Mammary epithelial cell (primary cell): ENCODE measurements at regions of chr3 and their contacts with region 1.

Region 1: DNA sequence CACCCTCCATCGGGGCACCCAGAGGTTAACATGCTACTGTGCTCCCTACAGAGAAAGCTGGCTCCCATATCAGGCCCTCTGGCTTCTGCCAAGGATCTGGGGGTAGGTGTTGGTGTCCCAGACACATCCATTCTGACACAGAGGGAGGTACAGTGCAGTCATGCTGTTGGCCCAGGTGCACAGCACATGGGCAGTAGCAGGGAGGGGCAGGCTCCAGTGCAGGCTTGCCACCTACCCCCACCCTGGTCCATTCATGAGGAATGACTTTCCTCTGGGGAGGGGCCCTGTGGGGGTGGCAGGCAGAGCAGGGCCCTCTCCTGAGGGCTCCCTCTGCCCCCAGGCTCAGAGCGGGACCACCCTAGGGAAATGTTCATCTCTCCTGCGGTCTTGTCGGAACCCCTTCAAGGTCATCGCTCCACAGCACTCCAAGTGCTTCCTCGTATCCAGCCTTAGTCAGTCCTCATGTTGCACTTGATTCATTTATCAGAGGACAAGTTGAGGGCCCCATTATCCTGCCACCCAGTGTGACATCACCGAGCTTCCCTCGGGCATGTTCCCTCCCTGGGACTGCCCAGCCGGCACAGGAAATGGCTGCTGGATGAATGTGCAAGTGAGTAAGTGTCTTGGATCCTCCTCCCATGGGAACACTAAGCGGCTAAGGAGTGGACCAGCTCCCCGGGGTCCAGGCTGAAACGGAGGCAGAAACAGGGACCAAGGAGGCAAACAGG is 10.0 kb downstream of the DUSP7 start:
- DNase-seq: peak; percentile 100
- H3K4me3 ChIP-seq: peak overlapping the region in 2 of 3 experiments; percentile 4 to 21
- H3K27ac ChIP-seq: peak overlapping the region; percentile 98
- H3K4me1 ChIP-seq: peaks cover 60% of the 10 kb centered on the region
- H3K27me3 ChIP-seq: no peaks in the 10 kb centered on the region
- CTCF ChIP-seq: no peak

Region 2: GRCh38 chr3:51941798-51942602 is 104.3 kb before region 1 on chr3 and contains the starts of genes PARP3 and RRP9:
- CTCF ChIA-PET with region 1: no interaction called
- dilution Hi-C with region 1: no loop called
- in situ Hi-C with region 1: loop called in 1 of 2 experiments (anchors 5 kb)
- intact Hi-C with region 1: loop called (anchors 1 kb)
- DNase-seq: peak; percentile 100
- H3K4me3 ChIP-seq: peak within 1 kb of the TSS; percentile 62 to 80 (median 73)
- H3K27ac ChIP-seq: peak within 1 kb of the TSS; percentile 38
- H3K4me1 ChIP-seq: peaks cover 21% of the 10 kb centered on the region
- H3K27me3 ChIP-seq: no peaks in the 10 kb centered on the region
- CTCF ChIP-seq: peak; percentile 98 to 100
- total RNA-seq, gene PARP3: 16.1 to 19.7 TPM
- total RNA-seq, gene RRP9: 22.3 to 44.5 TPM

Region 3: DNA sequence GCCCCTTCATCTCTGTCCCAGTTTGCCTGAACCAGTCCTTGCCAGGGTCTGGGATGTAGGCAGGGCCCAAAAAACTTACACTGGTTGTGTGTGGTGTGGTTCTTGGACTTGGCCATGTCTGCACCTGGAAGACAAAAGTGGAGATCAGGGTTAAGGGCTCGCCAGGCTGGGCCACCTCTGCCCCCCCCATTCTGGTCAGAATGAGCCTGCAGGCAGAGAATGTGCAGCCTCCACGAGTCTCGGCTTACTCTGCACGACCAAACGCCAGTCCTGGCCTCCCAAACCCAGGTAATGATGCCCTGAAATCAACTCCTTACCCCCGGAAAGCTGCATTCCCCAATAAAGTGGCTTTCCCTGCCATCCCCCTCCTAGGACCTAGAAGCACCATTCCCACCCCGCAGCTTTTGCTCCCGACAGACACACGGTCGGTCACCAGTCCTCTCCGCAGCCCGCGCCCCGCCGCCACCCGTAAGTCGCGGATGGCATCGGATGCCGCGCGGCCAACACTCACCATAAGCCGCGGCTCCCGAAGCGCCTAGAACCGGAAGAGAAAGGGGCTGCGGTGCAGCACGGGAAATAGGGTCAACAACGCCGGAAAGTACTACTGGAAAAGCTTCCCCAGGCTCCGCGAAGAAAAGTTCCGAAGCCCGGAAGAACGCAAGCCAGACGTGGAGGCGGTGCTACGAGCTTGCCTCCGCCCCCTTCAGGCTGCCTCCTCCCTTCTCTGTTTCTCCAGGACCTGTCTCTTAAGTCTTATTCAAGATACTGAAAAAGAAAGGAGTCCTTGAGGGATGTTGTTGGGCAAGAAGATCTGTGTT is 50.8 kb before region 1 on chr3 and contains the start of gene RPL29:
- CTCF ChIA-PET with region 1: no interaction called
- dilution Hi-C with region 1: loop called (anchors 5 kb)
- in situ Hi-C with region 1: loop called (anchors 5 to 10 kb)
- intact Hi-C with region 1: no loop called
- DNase-seq: peak; percentile 90
- H3K4me3 ChIP-seq: peak within 1 kb of the TSS; percentile 59 to 96 (median 74)
- H3K27ac ChIP-seq: peak within 1 kb of the TSS; percentile 85
- H3K4me1 ChIP-seq: peaks cover 23% of the 10 kb centered on the region
- H3K27me3 ChIP-seq: no peaks in the 10 kb centered on the region
- CTCF ChIP-seq: no peak
- total RNA-seq, gene RPL29: 1,040 to 1,174 TPM

Region 4: DNA sequence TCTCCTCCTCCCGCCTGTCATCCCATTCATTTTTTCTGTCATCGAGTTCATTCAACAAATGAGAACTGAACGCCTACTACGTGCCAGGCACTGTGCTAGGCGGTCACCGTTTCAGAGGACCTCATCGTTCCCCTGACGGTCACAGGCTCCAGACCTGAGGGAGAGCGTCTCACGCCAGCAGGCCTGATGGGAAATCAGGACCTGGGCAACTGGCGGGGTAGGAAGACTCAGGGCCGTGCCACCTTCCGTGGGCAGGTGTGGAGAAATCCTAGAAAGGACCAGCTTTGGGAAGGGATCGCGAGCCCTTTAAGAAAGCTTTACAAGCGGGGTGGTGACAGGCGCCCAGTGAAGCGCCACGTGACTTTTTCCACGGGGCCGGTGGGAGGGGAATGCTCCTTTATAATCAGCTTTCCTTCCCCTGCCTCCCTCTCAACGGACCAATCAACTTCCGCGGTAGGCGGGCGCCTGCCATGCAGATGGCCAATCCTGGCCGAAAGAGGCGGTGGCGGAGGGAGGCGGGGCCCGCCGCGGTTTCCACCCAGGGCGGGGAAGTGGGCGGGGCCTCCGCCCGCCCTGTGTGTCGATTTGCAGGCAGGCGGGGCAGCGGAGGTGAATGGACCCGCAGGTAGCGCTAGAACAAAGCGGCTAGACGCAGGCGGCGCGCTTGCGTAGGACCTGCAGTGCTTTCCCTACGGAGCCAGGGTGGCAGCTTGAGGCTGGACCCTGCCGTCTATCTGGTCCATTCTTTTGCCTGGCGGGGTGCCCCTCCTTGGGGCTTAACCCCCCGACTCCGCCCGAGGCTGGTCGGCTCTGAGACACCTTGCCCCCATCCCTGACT is 10.8 kb after region 1 on chr3:
- CTCF ChIA-PET with region 1: interaction called, 5 read pairs
- dilution Hi-C with region 1: no loop called
- in situ Hi-C with region 1: no loop called
- intact Hi-C with region 1: loop called (anchors 1 kb)
- DNase-seq: peak; percentile 100
- H3K4me3 ChIP-seq: peak overlapping the region; percentile 45 to 64 (median 54)
- H3K27ac ChIP-seq: peak overlapping the region; percentile 88
- H3K4me1 ChIP-seq: peaks cover 66% of the 10 kb centered on the region
- H3K27me3 ChIP-seq: no peaks in the 10 kb centered on the region
- CTCF ChIP-seq: peak in 1 of 2 donors; percentile 24

Region 5: DNA sequence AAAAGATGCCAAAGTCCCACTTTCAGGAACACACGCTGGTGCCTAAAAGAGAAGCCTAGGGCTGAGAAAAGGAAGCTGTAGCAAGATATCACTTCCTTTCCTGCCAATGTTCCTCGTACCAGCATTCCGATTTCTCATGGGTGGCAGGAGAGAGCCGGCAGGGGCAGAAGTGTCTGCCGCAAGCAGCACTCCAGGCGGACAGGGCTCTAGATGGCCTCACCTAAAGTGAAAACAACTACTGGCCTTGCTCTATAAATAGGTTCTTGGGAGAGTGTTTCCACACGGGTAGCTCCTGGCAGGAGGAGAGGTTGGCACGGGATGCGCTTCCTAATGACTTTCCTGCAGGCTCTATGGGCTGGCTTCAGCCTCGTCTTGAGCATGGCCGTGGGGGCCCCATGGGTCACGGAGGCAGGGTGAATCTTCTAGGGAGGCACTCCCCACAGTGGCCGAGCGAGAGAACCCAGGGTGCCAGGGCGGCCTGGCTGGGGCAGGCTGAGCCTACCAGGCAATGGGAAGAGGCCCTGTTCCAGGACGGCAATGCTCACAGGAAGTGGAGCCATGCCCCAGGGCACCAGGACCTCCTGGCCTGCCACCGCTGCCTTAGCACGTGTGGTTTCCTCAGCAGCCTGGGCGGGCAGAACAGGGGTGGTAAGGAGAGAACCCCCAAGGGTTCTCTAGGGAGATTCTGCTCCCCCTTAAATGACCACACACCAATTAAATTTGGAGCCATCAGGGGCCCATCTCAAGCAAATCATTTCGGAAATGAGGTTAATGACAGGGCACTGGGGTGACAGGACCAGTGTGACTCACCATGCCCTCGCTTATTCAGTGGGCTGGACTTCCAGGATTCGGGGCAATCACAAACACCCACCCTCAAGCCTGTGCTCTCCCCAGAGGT is 24.6 kb after region 1 on chr3:
- CTCF ChIA-PET with region 1: no interaction called
- dilution Hi-C with region 1: no loop called
- in situ Hi-C with region 1: no loop called
- intact Hi-C with region 1: no loop called
- DNase-seq: no peak
- H3K4me3 ChIP-seq: no peak overlapping the region
- H3K27ac ChIP-seq: no peak overlapping the region
- H3K4me1 ChIP-seq: peaks cover 30% of the 10 kb centered on the region
- H3K27me3 ChIP-seq: no peaks in the 10 kb centered on the region
- CTCF ChIP-seq: no peak

Region 6: GRCh38 chr3:52090131-52090932 is 44.0 kb after region 1 on chr3:
- CTCF ChIA-PET with region 1: no interaction called
- dilution Hi-C with region 1: loop called (anchors 5 kb)
- in situ Hi-C with region 1: no loop called
- intact Hi-C with region 1: no loop called
- DNase-seq: peak; percentile 54
- H3K4me3 ChIP-seq: no peak overlapping the region
- H3K27ac ChIP-seq: peak overlapping the region; percentile 4
- H3K4me1 ChIP-seq: peaks cover 20% of the 10 kb centered on the region
- H3K27me3 ChIP-seq: no peaks in the 10 kb centered on the region
- CTCF ChIP-seq: no peak

Region 7: DNA sequence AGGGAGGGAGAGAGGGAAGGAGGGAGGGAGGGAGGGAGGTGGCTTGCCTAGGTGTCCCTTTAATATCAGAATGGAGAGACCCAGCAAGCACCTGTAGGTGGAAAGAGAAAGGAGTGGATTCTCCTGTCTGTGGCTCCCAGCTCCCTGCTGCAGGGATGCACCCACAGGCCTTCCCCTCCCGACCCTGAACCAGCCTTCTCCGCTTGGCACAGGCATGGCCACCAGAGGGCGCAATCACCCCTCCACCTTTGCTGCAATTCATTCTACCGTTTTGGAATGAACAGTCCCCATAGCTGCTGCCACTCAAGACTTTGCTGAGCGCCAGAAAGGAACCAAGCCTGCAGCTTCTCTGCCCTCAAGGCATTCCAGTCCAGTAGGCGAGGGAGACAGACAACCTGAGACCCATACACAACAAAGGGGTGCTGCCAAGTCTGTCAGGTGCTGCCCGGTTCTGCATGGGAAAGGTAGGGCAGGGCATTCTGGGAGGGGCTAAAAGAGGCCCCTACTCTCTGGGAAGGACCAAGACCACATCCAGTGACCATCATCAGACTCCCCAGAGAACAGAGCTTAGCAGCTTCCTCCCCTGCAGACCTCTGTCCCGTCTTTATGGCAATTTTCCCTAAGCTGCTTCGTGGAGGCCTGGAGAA is 174.2 kb after region 1 on chr3:
- CTCF ChIA-PET with region 1: no interaction called
- dilution Hi-C with region 1: no loop called
- in situ Hi-C with region 1: no loop called
- intact Hi-C with region 1: loop called (anchors 5 kb)
- DNase-seq: peak; percentile 53
- H3K4me3 ChIP-seq: no peak overlapping the region
- H3K27ac ChIP-seq: no peak overlapping the region
- H3K4me1 ChIP-seq: peaks cover 28% of the 10 kb centered on the region
- H3K27me3 ChIP-seq: no peaks in the 10 kb centered on the region
- CTCF ChIP-seq: peak; percentile 94 to 96